Stomach (tissue), 19 donors: ENCODE measurements at regions of chr4 and their contacts with region 1.

Region 1: GRCh38 chr4:10018818-10019461 is 2.4 kb downstream of the SLC2A9 start:
- DNase-seq: peak; percentile 95 to 98
- H3K4me3 ChIP-seq: peak overlapping the region; percentile 38 to 49 (median 44)
- H3K27ac ChIP-seq: peak overlapping the region; percentile 77 to 90 (median 90)
- H3K4me1 ChIP-seq: peaks cover 15 to 47% (median 20%) of the 10 kb centered on the region in 4 donors
- H3K27me3 ChIP-seq: no peaks in the 10 kb centered on the region
- CTCF ChIP-seq: peak in 5 of 7 experiments; percentile 92 to 99 (median 98)
- EP300 ChIP-seq: no peak
- POLR2A ChIP-seq: no peak

Region 2: GRCh38 chr4:9691238-9692065 is 327.5 kb before region 1 on chr4:
- intact Hi-C with region 1: loop called (anchors 10 kb)
- DNase-seq: peak; percentile 96 to 99
- H3K4me3 ChIP-seq: peak overlapping the region; percentile 53 to 67 (median 58)
- H3K27ac ChIP-seq: peak overlapping the region; percentile 73 to 87 (median 83)
- H3K4me1 ChIP-seq: peaks cover 0 to 11% (median 6%) of the 10 kb centered on the region in 4 donors
- H3K27me3 ChIP-seq: no peaks in the 10 kb centered on the region
- CTCF ChIP-seq: no peak
- EP300 ChIP-seq: no peak
- POLR2A ChIP-seq: no peak

Region 3: GRCh38 chr4:9762823-9763475 is 256.0 kb before region 1 on chr4:
- intact Hi-C with region 1: loop called (anchors 5 kb)
- DNase-seq: peak; percentile 51 to 90
- H3K4me3 ChIP-seq: no peak overlapping the region
- H3K27ac ChIP-seq: no peak overlapping the region
- H3K4me1 ChIP-seq: no peaks in the 10 kb centered on the region
- H3K27me3 ChIP-seq: peaks cover 0 to 25% (median 0%) of the 10 kb centered on the region in 3 donors
- CTCF ChIP-seq: peak in 5 of 7 experiments; percentile 37 to 72 (median 53)
- EP300 ChIP-seq: no peak
- POLR2A ChIP-seq: no peak